ENCODE measurements at regions of chr12 and their contacts with region 1.

Region 1: GRCh38 chr12:122265931-122266771 is at the start of gene VPS33A:
- DNase-seq: peak; percentile 81 to 96 (median 88)
- ATAC-seq: peak; percentile 81 to 87 (median 84)
- H3K4me3 ChIP-seq: peak within 1 kb of the TSS; percentile 85 to 99
- H3K4me3 Mint-ChIP-seq: peak within 1 kb of the TSS; percentile 92 to 97 (median 95)
- H3K27ac ChIP-seq: peak within 1 kb of the TSS; percentile 94
- H3K27ac Mint-ChIP-seq: peak within 1 kb of the TSS; percentile 99
- H3K4me1 ChIP-seq: peaks cover 4 to 22% of the 10 kb centered on the region in 2 experiments
- H3K4me1 Mint-ChIP-seq: peaks cover 18 to 38% (median 35%) of the 10 kb centered on the region in 3 donors
- H3K27me3 ChIP-seq: no peaks in the 10 kb centered on the region
- H3K27me3 Mint-ChIP-seq: peaks cover 0 to 3% of the 10 kb centered on the region in 2 donors
- total RNA-seq, gene VPS33A: 22.7 to 35.0 (median 29.5) TPM

Region 2: GRCh38 chr12:121749254-121749642 is 516.9 kb before region 1 on chr12:
- CTCF ChIA-PET with region 1: no interaction called
- POLR2A ChIA-PET with region 1: interaction called in 1 of 2 experiments, 10 read pairs
- DNase-seq: no peak
- ATAC-seq: no peak
- H3K4me3 ChIP-seq: no peak overlapping the region
- H3K4me3 Mint-ChIP-seq: no peak overlapping the region
- H3K27ac ChIP-seq: no peak overlapping the region
- H3K27ac Mint-ChIP-seq: peak overlapping the region; percentile 70 to 83
- H3K4me1 ChIP-seq: peaks cover 0 to 12% of the 10 kb centered on the region in 2 experiments
- H3K4me1 Mint-ChIP-seq: peaks cover 0 to 15% (median 6%) of the 10 kb centered on the region in 3 donors
- H3K27me3 ChIP-seq: no peaks in the 10 kb centered on the region
- H3K27me3 Mint-ChIP-seq: no peaks in the 10 kb centered on the region

Region 3: DNA sequence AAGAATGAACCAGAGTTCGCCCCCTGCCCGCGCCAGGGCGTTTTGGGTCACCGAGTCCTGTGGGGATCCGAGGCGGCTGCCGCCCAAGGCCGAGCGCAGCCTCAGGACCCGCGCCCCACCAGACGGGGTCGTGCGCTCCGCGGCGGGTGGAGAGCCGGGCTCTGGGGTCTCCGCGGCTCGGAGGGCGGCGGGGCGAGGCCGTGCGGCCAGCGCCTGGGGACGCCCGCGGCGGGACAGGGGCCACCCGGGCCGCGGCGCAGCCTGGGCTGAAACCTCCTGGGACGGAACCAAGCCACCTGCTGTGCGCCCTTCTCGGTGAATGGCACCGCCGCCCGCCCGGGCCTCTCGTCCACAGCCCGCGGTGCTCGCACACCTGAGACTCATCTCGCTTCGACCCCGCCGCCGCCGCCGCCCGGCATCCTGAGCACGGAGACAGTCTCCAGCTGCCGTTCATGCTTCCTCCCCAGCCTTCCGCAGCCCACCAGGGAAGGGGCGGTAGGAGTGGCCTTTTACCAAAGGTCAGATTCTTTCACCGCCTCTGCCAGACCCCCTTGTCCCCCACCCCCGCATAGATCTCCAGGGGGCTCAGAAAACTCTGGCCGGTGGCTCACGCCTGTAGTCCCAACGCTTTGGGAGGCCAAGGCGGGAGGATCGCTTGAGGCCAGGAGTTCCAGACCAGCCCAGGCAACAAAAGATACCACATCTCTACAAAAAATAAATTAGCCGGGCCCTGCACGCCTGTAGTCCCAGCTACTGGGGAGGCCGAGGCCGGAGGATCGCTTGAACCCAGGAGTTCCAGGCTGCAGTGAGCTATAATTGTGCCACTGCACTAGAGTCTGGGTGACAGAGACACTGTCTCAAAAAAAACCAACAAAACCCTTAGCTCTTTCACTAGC is 61.7 kb before region 1 on chr12:
- CTCF ChIA-PET with region 1: interaction called in 1 of 2 experiments, 3 read pairs
- POLR2A ChIA-PET with region 1: interaction called, 5 to 10 read pairs
- DNase-seq: peak in 11 of 35 experiments; percentile 15 to 49 (median 33)
- ATAC-seq: peak; percentile 20 to 43 (median 26)
- H3K4me3 ChIP-seq: peak overlapping the region; percentile 15 to 62
- H3K4me3 Mint-ChIP-seq: peak overlapping the region; percentile 56 to 71 (median 62)
- H3K27ac ChIP-seq: no peak overlapping the region
- H3K27ac Mint-ChIP-seq: peak overlapping the region in 1 of 2 donors; percentile 61
- H3K4me1 ChIP-seq: peaks cover 7 to 16% of the 10 kb centered on the region in 2 experiments
- H3K4me1 Mint-ChIP-seq: peaks cover 10 to 17% (median 15%) of the 10 kb centered on the region in 3 donors
- H3K27me3 ChIP-seq: peaks cover 2 to 39% of the 10 kb centered on the region in 2 experiments
- H3K27me3 Mint-ChIP-seq: peaks cover 7 to 8% of the 10 kb centered on the region in 2 donors

Region 4: GRCh38 chr12:122225683-122226407 is 40.3 kb before region 1 on chr12 and contains the start of gene DIABLO:
- CTCF ChIA-PET with region 1: interaction called in 1 of 2 experiments, 28 read pairs
- POLR2A ChIA-PET with region 1: interaction called, 4 to 8 read pairs
- DNase-seq: peak; percentile 97 to 100 (median 100)
- ATAC-seq: peak; percentile 89 to 95 (median 94)
- H3K4me3 ChIP-seq: peak within 1 kb of the TSS; percentile 90 to 96
- H3K4me3 Mint-ChIP-seq: peak within 1 kb of the TSS; percentile 82 to 90 (median 87)
- H3K27ac ChIP-seq: peak within 1 kb of the TSS; percentile 91
- H3K27ac Mint-ChIP-seq: peak within 1 kb of the TSS; percentile 85 to 89
- H3K4me1 ChIP-seq: peaks cover 10 to 48% of the 10 kb centered on the region in 2 experiments
- H3K4me1 Mint-ChIP-seq: peaks cover 40 to 56% (median 51%) of the 10 kb centered on the region in 3 donors
- H3K27me3 ChIP-seq: no peaks in the 10 kb centered on the region
- H3K27me3 Mint-ChIP-seq: no peaks in the 10 kb centered on the region
- total RNA-seq, gene DIABLO: 39.8 to 85.1 (median 41.3) TPM

Region 5: GRCh38 chr12:122244565-122245371 is 21.4 kb before region 1 on chr12:
- CTCF ChIA-PET with region 1: interaction called in 1 of 2 experiments, 30 read pairs
- POLR2A ChIA-PET with region 1: interaction called in 1 of 2 experiments, 18 read pairs
- DNase-seq: peak in 16 of 35 experiments; percentile 1 to 60 (median 14)
- ATAC-seq: peak; percentile 79 to 84 (median 83)
- H3K4me3 ChIP-seq: peak overlapping the region in 1 of 2 donors; percentile 49
- H3K4me3 Mint-ChIP-seq: peak overlapping the region; percentile 76 to 85 (median 82)
- H3K27ac ChIP-seq: peak overlapping the region; percentile 72
- H3K27ac Mint-ChIP-seq: peak overlapping the region; percentile 91 to 93
- H3K4me1 ChIP-seq: peaks cover 5 to 26% of the 10 kb centered on the region in 2 experiments
- H3K4me1 Mint-ChIP-seq: peaks cover 17 to 41% (median 34%) of the 10 kb centered on the region in 3 donors
- H3K27me3 ChIP-seq: no peaks in the 10 kb centered on the region
- H3K27me3 Mint-ChIP-seq: no peaks in the 10 kb centered on the region

Measured in T-cell (primary cell).